ENCODE measurements at regions of chr11 and their contacts with region 1.

Region 1: GRCh38 chr11:123246749-123247495 is 51.9 kb upstream of the CLMP start:
- DNase-seq: peak; percentile 85
- H3K4me3 Mint-ChIP-seq: no peak overlapping the region
- H3K27ac Mint-ChIP-seq: no peak overlapping the region
- H3K4me1 Mint-ChIP-seq: peaks cover 12% of the 10 kb centered on the region
- H3K27me3 Mint-ChIP-seq: no peaks in the 10 kb centered on the region
- CTCF ChIP-seq: peak; percentile 94

Region 2: DNA sequence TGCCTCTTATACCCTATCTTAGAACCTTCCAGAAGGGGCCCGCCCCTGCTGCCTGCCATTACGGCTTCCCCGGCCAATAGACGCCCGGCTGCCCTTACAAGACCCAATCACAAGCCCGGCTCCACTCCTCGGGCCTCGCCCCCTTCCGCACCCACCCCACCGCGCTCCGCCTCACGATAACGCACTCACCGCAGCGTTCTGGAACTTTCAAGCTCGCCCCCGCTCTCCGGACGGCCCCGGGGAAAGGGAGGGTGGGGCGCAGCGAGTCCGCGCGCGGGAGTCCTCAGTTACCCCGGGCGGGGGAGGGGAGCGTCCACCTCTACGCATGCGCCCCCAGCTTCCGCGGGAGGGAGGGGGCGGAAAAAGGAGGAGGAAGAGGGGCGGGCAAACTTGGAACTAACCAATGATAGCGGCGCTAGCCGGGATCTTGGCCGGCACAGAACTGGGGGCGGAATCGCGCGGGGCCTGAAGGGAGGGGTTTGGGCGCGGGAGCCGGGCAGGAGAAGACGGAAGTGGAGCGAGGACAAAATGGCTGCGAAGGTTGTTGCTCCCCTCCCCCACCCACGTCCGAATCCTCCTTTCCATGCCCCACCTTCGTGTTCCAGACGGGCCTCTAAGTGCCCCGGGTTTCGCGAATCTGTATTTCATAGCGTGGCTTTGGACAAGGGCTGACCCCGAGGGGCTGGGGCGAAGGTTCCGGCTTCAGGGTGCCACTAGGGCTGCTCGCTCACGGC is 184.6 kb before region 1 on chr11:
- CTCF ChIA-PET with region 1: interaction called, 7 read pairs
- POLR2A ChIA-PET with region 1: interaction called, 3 read pairs
- intact Hi-C with region 1: loop called (anchors 2 kb)
- DNase-seq: peak; percentile 99
- H3K4me3 Mint-ChIP-seq: peak overlapping the region; percentile 97
- H3K27ac Mint-ChIP-seq: peak overlapping the region; percentile 99
- H3K4me1 Mint-ChIP-seq: peaks cover 46% of the 10 kb centered on the region
- H3K27me3 Mint-ChIP-seq: no peaks in the 10 kb centered on the region
- CTCF ChIP-seq: no peak

Region 3: GRCh38 chr11:123103326-123103980 is 143.5 kb before region 1 on chr11:
- CTCF ChIA-PET with region 1: interaction called, 487 read pairs
- POLR2A ChIA-PET with region 1: interaction called, 10 read pairs
- intact Hi-C with region 1: loop called (anchors 1 kb)
- DNase-seq: peak; percentile 69
- H3K4me3 Mint-ChIP-seq: no peak overlapping the region
- H3K27ac Mint-ChIP-seq: no peak overlapping the region
- H3K4me1 Mint-ChIP-seq: peaks cover 9% of the 10 kb centered on the region
- H3K27me3 Mint-ChIP-seq: no peaks in the 10 kb centered on the region
- CTCF ChIP-seq: peak; percentile 41

Region 4: GRCh38 chr11:123122341-123122740 is 124.6 kb before region 1 on chr11:
- CTCF ChIA-PET with region 1: interaction called, 487 read pairs
- POLR2A ChIA-PET with region 1: interaction called, 3 read pairs
- intact Hi-C with region 1: no loop called
- DNase-seq: peak; percentile 97
- H3K4me3 Mint-ChIP-seq: peak overlapping the region; percentile 59
- H3K27ac Mint-ChIP-seq: peak overlapping the region; percentile 97
- H3K4me1 Mint-ChIP-seq: peaks cover 30% of the 10 kb centered on the region
- H3K27me3 Mint-ChIP-seq: no peaks in the 10 kb centered on the region
- CTCF ChIP-seq: no peak

Region 5: DNA sequence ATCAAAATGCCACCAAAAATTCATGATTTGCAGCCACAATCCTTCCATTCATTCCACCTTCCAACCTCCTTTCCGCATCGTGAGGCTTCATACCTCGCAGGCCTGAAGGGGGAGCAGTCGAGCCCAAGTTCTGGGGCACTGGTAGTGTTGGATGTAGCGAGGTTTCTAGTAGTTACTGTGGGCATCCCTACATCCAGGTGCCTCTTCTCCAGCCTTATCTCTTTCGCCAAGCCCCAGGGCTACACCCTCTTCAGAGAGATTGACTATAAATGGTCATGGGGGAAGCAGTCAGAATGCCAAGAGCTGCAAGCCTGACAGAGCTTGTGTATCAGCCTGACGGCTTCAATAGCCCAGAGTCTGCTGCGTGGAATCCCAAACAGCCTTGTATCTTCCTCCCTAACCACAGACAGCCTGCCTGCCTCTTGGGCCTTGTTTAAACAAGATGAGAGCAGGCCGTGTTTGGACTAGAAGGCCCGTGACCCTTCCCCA is 80.8 kb before region 1 on chr11:
- CTCF ChIA-PET with region 1: interaction called, 15 read pairs
- POLR2A ChIA-PET with region 1: no interaction called
- intact Hi-C with region 1: loop called (anchors 1 kb)
- DNase-seq: peak; percentile 67
- H3K4me3 Mint-ChIP-seq: no peak overlapping the region
- H3K27ac Mint-ChIP-seq: no peak overlapping the region
- H3K4me1 Mint-ChIP-seq: peaks cover 21% of the 10 kb centered on the region
- H3K27me3 Mint-ChIP-seq: no peaks in the 10 kb centered on the region
- CTCF ChIP-seq: peak; percentile 29

Region 6: DNA sequence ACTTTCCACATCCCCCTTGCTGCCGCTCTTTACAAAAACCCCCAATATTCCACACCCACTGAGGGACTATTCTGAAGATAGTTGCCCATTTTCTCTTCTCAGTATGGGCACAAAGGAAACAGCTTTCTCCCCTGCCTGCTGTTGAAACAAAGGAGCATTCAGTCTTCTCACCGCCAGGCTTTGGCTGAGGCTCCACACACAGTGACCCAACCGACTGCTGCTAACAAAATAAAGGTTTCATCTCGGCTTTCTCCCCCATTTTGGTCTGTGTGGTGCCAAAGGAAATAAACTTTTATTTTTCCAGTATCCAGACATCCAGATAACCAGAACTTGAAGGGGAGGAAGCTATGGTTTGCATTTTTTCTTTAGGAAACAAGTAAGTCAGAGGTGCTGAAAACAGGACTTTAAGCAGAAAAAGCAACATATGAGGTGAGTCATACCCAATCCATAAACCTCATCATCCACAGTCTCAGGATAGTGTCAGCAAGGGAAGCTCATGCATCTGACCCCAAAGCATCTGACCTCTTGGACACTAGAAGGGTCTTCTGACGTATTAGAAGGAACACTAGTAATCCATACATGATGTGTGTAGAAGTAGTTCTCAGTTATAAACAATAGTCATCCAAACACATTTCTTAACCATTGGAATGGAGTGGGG is 58.3 kb before region 1 on chr11:
- CTCF ChIA-PET with region 1: interaction called, 16 read pairs
- POLR2A ChIA-PET with region 1: no interaction called
- intact Hi-C with region 1: no loop called
- DNase-seq: peak; percentile 63
- H3K4me3 Mint-ChIP-seq: peak overlapping the region; percentile 52
- H3K27ac Mint-ChIP-seq: peak overlapping the region; percentile 93
- H3K4me1 Mint-ChIP-seq: peaks cover 46% of the 10 kb centered on the region
- H3K27me3 Mint-ChIP-seq: no peaks in the 10 kb centered on the region
- CTCF ChIP-seq: no peak

Region 7: DNA sequence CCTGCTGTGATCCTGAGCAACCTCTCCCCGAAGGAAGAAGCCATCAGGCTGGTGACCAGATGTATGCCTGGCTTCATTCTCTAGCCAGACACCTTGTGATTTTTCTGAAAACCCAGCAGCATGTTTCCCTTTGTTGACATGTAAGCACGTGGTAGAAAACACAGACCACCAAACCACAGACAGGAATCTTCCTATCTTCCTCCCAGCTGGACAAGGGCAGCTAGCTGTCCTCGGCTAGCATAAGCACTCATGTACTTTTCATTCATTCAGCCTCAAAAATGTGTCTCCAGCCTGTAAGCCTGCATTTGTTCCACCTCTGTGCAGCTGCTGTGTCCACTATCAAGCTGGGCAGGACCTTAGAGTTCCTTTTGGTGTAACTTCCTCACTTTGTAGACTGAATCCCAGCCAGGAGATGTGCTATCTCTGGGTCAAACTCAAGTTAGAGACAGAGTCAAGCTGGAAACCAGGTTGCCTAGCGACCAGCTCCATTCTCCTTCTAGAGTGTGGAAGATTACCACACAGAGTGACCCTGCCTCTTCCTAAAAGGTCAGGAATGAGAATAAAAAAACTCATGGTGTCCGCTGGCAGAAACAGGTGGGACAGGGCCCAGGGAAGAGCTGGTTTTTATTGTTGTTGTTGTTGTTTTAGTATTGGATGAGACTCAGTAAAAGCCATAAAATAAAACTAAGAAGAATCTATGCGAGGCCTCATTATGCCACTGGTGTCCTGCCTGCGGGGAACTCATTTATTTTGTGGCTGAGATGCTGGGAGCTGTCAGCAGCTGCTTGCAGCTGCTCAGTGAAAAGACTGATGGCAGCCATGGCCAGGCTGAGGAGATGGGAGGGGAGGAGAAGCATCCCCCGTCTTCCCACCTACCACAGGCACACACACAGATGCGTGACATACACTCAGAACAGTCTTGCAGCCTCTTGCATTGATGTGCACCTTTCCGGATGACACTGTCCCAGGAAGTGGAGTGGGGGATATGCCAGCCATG is 44.5 kb before region 1 on chr11:
- CTCF ChIA-PET with region 1: interaction called, 12 read pairs
- POLR2A ChIA-PET with region 1: interaction called, 3 read pairs
- intact Hi-C with region 1: no loop called
- DNase-seq: no peak
- H3K4me3 Mint-ChIP-seq: no peak overlapping the region
- H3K27ac Mint-ChIP-seq: no peak overlapping the region
- H3K4me1 Mint-ChIP-seq: peaks cover 25% of the 10 kb centered on the region
- H3K27me3 Mint-ChIP-seq: no peaks in the 10 kb centered on the region
- CTCF ChIP-seq: no peak